ENCODE measurements at regions of chr19 and their contacts with region 1.

Region 1: DNA sequence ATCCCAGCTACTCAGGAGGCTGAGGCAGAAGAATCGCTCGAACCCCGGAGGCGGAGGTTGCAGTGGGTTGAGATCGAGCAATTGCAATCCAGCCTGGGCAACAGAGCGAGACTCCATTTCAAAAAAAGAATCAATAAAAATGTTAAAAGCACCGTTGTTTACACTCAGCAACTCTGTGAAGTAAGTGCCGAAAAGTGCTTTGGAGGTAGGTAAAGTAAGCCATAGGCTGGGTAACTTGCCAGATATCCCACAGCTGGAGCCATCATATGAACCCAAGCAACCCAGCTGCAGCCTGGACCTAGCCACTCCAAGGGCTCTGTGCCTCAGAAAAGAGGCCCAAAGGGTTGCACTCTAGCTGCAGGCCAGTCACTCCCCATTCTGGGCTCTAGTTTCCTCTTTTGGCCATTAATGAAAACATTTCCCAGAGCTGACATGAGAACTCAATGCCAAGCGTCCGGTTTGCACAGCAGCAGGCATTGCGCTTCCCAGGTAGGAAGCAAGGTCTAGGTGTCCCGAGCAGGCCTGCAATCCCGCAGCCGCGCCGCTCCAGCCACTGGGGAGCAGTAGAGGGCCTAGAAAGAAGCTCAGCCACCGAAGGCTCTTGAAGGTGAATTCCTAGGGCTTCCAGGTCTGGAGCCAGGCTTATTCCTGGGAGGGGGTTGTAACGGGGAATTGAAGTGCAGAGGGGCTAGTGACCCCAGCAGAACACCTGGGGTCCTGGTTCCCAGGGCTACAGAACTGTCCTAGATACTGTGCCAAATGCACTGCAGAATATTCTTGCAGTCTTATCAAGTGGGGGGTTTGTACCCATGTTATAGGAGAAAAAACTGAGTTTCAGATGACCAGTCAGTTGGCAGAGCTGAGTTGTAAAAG is 4.1 kb upstream of the CD79A start:
- DNase-seq: peak; percentile 72
- H3K4me3 ChIP-seq: no peak overlapping the region; a peak in 1 of 4 replicates
- H3K27ac ChIP-seq: peak overlapping the region in 1 of 2 experiments; percentile 0; a peak in 1 of 4 replicates
- H3K4me1 ChIP-seq: no peaks in the 10 kb centered on the region; a peak in 1 of 4 replicates
- H3K27me3 ChIP-seq: no peaks in the 10 kb centered on the region
- CTCF ChIP-seq: peak; percentile 68
- EP300 ChIP-seq: no peak
- RAD21 ChIP-seq: peak; percentile 79

Region 2: GRCh38 chr19:41844601-41845000 is 28.4 kb before region 1 on chr19 and contains the start of gene LYPD4:
- CTCF ChIA-PET with region 1: no interaction called
- POLR2A ChIA-PET with region 1: no interaction called
- DNase-seq: peak; percentile 53
- H3K4me3 ChIP-seq: no peak within 1 kb of the TSS
- H3K27ac ChIP-seq: no peak within 1 kb of the TSS
- H3K4me1 ChIP-seq: no peaks in the 10 kb centered on the region
- H3K27me3 ChIP-seq: peaks cover 17% of the 10 kb centered on the region; the same call in 1 of the 2 replicates
- CTCF ChIP-seq: no peak
- EP300 ChIP-seq: no peak
- RAD21 ChIP-seq: no peak
- polyA plus RNA-seq, gene LYPD4: not detected in 2 replicates

Region 3: GRCh38 chr19:41883821-41884733 is 11.1 kb after region 1 on chr19:
- CTCF ChIA-PET with region 1: interaction called, 12 read pairs
- POLR2A ChIA-PET with region 1: interaction called, 4 read pairs
- DNase-seq: peak; percentile 98
- H3K4me3 ChIP-seq: peak overlapping the region; percentile 74 to 87
- H3K27ac ChIP-seq: peak overlapping the region; percentile 6 to 40; a peak in 2 of 4 replicates
- H3K4me1 ChIP-seq: peaks cover 11 to 16% of the 10 kb centered on the region in 2 experiments; a peak in 3 of 4 replicates
- H3K27me3 ChIP-seq: no peaks in the 10 kb centered on the region
- CTCF ChIP-seq: no peak
- EP300 ChIP-seq: peak in 1 of 2 experiments; percentile 49; a peak in 1 of 4 replicates
- RAD21 ChIP-seq: no peak

Region 4: GRCh38 chr19:41934849-41935374 is 61.9 kb after region 1 on chr19:
- CTCF ChIA-PET with region 1: interaction called, 17 read pairs
- POLR2A ChIA-PET with region 1: no interaction called
- DNase-seq: peak; percentile 93
- H3K4me3 ChIP-seq: no peak overlapping the region; a peak in 1 of 4 replicates
- H3K27ac ChIP-seq: no peak overlapping the region
- H3K4me1 ChIP-seq: peaks cover 0 to 11% of the 10 kb centered on the region in 2 experiments; a peak in 2 of 4 replicates
- H3K27me3 ChIP-seq: peaks cover 13% of the 10 kb centered on the region
- CTCF ChIP-seq: peak; percentile 90
- EP300 ChIP-seq: no peak
- RAD21 ChIP-seq: peak; percentile 76

Region 5: GRCh38 chr19:41945135-41945766 is 72.2 kb after region 1 on chr19:
- CTCF ChIA-PET with region 1: interaction called, 48 read pairs
- POLR2A ChIA-PET with region 1: interaction called, 3 read pairs
- DNase-seq: no peak
- H3K4me3 ChIP-seq: no peak overlapping the region
- H3K27ac ChIP-seq: no peak overlapping the region
- H3K4me1 ChIP-seq: no peaks in the 10 kb centered on the region; a peak in 1 of 4 replicates
- H3K27me3 ChIP-seq: no peaks in the 10 kb centered on the region
- CTCF ChIP-seq: no peak
- EP300 ChIP-seq: no peak
- RAD21 ChIP-seq: no peak

Region 6: DNA sequence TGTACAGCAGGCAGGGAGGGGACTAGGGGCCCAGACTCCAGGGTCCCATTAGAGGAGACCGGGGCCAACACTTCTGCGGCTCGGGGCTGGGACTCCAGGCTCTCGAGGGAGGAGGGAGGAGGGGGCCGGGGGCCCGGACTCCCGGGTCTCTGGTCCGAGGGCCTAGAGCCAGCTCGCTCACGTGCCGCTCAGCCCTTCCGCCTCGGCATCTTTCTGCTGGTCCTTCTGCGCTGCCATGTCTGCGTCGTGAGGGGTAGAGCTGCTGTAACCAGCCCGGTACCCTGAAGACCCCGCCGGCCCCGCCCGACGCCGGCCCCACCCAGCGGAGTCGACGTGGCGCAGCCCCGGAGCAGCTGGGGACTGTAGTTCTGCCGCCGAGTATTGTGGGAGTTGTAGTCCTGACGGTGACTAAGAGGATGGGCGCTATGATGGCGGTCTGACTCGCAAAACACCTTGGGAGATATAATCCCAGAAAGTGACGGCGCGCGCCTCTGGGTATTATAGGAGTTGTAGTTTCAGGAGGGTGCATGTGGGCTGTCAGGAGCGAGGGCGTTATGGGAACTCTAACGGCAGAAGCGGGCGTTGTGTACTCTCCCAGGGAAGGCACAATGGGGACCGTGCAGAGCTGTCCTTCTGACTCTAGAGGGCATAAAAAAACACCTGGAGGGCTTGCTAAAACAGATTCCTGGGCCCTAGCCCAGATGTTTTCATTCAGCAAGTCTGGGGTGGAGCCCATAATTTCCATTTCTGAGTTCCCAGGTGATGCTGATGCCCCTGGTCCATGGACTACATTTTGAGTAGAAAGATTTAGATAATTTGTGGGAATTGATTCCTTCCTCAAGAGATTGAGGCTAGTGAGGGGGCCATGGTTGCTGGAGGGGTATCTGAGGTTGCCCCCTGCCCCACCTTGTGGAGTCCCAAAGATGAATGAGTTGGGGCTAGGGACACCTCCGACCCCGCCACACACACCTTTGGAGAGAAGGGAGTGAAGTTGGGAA is 86.3 kb after region 1 on chr19 and contains the start of gene RABAC1:
- CTCF ChIA-PET with region 1: interaction called, 38 read pairs
- POLR2A ChIA-PET with region 1: interaction called, 4 read pairs
- DNase-seq: peak; percentile 95
- H3K4me3 ChIP-seq: peak within 1 kb of the TSS; percentile 77 to 89
- H3K27ac ChIP-seq: peak within 1 kb of the TSS; percentile 75 to 82
- H3K4me1 ChIP-seq: peaks cover 6 to 10% of the 10 kb centered on the region in 2 experiments; a peak in 2 of 4 replicates
- H3K27me3 ChIP-seq: no peaks in the 10 kb centered on the region
- CTCF ChIP-seq: peak; percentile 34
- EP300 ChIP-seq: no peak
- RAD21 ChIP-seq: no peak; the same call in 1 of the 2 replicates
- polyA plus RNA-seq, gene RABAC1: 252 and 287 TPM in 2 replicates

Region 7: GRCh38 chr19:42003506-42004294 is 130.7 kb after region 1 on chr19:
- CTCF ChIA-PET with region 1: no interaction called
- POLR2A ChIA-PET with region 1: no interaction called
- DNase-seq: peak; percentile 14
- H3K4me3 ChIP-seq: no peak overlapping the region
- H3K27ac ChIP-seq: no peak overlapping the region
- H3K4me1 ChIP-seq: peaks cover 0 to 11% of the 10 kb centered on the region in 2 experiments; a peak in 1 of 4 replicates
- H3K27me3 ChIP-seq: peaks cover 31% of the 10 kb centered on the region
- CTCF ChIP-seq: no peak
- EP300 ChIP-seq: no peak
- RAD21 ChIP-seq: no peak

Region 8: GRCh38 chr19:42018503-42019193 is 145.6 kb after region 1 on chr19:
- CTCF ChIA-PET with region 1: no interaction called
- POLR2A ChIA-PET with region 1: no interaction called
- DNase-seq: no peak
- H3K4me3 ChIP-seq: no peak overlapping the region
- H3K27ac ChIP-seq: no peak overlapping the region
- H3K4me1 ChIP-seq: no peaks in the 10 kb centered on the region
- H3K27me3 ChIP-seq: no peaks in the 10 kb centered on the region
- CTCF ChIP-seq: no peak
- EP300 ChIP-seq: no peak
- RAD21 ChIP-seq: no peak